Gastrocnemius medialis (tissue), 4 donors: ENCODE measurements at regions of chr22 and their contacts with region 1.

Region 1: GRCh38 chr22:37199103-37199759 is 11.2 kb upstream of the C1QTNF6 start:
- DNase-seq: peak; percentile 97 to 98
- ATAC-seq: peak; percentile 73 to 75
- H3K4me3 ChIP-seq: peak overlapping the region; percentile 69 to 78 (median 74)
- H3K27ac ChIP-seq: peak overlapping the region; percentile 96 to 99 (median 98)
- H3K4me1 ChIP-seq: peaks cover 30 to 36% of the 10 kb centered on the region in 2 donors
- H3K27me3 ChIP-seq: no peaks in the 10 kb centered on the region
- CTCF ChIP-seq: peak; percentile 93 to 98 (median 97)
- POLR2A ChIP-seq: peak; percentile 99

Region 2: DNA sequence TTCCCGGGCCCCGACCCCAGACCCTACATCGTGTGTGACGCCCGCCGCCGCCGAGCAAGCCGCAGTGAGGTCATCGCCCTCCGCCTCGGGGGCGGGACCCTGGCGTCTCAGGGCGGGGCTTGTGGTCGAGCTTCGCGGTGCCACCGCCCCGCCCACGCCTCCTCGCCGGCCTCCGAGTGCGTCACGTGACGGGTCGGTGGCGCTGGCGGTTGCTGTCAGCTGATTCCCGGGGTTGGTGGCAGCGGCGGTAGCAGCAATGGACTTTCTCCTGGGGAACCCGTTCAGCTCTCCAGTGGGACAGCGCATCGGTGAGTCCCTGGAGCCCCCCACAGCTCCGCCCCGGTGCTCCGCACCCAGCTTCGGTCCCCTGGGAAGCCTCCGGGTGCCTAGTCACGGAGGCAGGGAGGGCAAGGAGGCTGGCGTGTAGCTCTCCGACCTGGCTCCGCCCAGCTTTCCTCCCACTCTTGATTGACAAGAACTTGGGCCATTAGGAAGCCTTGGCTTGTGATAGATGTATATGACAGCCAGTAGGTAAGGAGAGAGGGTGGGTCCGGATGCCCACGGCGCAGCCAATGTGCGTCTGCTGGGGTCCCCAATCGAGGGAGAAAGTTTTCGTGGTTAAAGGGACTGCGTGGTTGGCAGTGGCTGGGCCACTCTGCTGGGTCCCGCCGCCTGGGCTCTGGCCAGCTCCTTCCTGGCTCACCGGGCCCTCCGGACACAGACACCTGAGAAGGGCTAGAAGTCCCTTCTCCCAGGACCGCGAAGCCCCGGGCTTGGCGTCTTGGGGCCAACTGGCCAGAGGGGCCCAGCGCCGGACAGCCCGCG is 1899.3 kb before region 1 on chr22 and contains the start of gene TOM1:
- in situ Hi-C with region 1: no loop called
- intact Hi-C with region 1: loop called (anchors 5 kb)
- DNase-seq: peak; percentile 96 to 98
- ATAC-seq: peak; percentile 87 to 91
- H3K4me3 ChIP-seq: peak within 1 kb of the TSS; percentile 80 to 86 (median 82)
- H3K27ac ChIP-seq: peak within 1 kb of the TSS; percentile 98 to 99 (median 98)
- H3K4me1 ChIP-seq: peaks cover 37 to 39% of the 10 kb centered on the region in 2 donors
- H3K27me3 ChIP-seq: no peaks in the 10 kb centered on the region
- CTCF ChIP-seq: peak in 1 of 5 experiments; percentile 36
- POLR2A ChIP-seq: peak; percentile 98
- total RNA-seq, gene TOM1: 363 to 609 (median 425) TPM

Region 3: DNA sequence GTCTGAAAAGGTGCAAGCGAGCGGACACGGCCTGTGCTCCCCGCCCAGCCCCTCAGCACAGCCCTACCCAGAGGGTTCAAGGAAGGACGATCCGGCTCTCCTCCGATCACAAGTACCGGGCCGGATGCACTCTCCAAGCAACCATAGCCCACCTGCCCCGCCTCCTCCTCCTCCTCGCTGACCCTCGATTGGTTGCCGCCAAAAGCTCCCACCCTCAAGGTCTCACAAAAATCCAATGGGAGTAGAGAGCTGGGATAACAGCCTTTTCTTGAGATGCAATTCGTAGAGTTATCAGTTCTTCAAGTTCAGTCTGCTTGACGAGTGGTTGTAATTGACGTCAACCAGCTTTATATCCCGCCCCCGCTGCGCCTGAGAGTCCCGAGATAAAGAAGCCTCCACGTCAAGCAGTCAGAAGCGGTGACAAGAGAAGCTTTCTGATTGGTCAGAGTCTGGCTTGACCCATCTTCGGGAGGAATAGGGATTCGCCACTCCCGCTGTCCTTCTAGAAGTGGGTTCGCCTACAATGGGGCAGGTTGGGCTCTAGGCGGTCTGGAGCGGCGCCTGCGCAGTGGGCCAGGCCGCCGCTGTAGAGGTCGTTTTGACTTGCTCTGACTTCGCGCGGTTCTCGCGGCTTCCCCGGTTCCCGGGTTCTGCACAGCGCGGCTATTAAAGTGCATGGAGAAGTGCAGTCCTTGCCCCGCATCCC is 423.1 kb before region 1 on chr22 and contains the start of gene IFT27:
- in situ Hi-C with region 1: no loop called
- intact Hi-C with region 1: loop called (anchors 10 kb)
- DNase-seq: peak; percentile 100
- ATAC-seq: peak; percentile 99 to 100
- H3K4me3 ChIP-seq: peak within 1 kb of the TSS; percentile 73 to 97 (median 95)
- H3K27ac ChIP-seq: peak within 1 kb of the TSS; percentile 84 to 92 (median 88)
- H3K4me1 ChIP-seq: peaks cover 13 to 16% of the 10 kb centered on the region in 2 donors
- H3K27me3 ChIP-seq: no peaks in the 10 kb centered on the region
- CTCF ChIP-seq: no peak
- POLR2A ChIP-seq: peak; percentile 34 to 46
- total RNA-seq, gene IFT27: 2.4 to 8.3 (median 6.7) TPM

Region 4: GRCh38 chr22:37019309-37020125 is 179.7 kb before region 1 on chr22 and contains the starts of genes MPST and TST:
- in situ Hi-C with region 1: no loop called
- intact Hi-C with region 1: loop called (anchors 1 kb)
- DNase-seq: peak; percentile 73 to 74
- ATAC-seq: peak; percentile 88
- H3K4me3 ChIP-seq: peak within 1 kb of the TSS; percentile 74 to 99 (median 84)
- H3K27ac ChIP-seq: peak within 1 kb of the TSS; percentile 88 to 99 (median 96)
- H3K4me1 ChIP-seq: peaks cover 23 to 33% of the 10 kb centered on the region in 2 donors
- H3K27me3 ChIP-seq: no peaks in the 10 kb centered on the region
- CTCF ChIP-seq: peak; percentile 18 to 79 (median 55)
- POLR2A ChIP-seq: peak; percentile 77 to 81
- total RNA-seq, gene MPST: 131 to 161 (median 146) TPM
- total RNA-seq, gene TST: 42.2 to 66.5 (median 51.9) TPM

Region 5: GRCh38 chr22:37051391-37052385 is 147.5 kb before region 1 on chr22 and contains the start of gene KCTD17:
- in situ Hi-C with region 1: no loop called
- intact Hi-C with region 1: no loop called
- DNase-seq: no peak
- ATAC-seq: no peak
- H3K4me3 ChIP-seq: peak within 1 kb of the TSS; percentile 45 to 51 (median 46)
- H3K27ac ChIP-seq: no peak within 1 kb of the TSS
- H3K4me1 ChIP-seq: no peaks in the 10 kb centered on the region
- H3K27me3 ChIP-seq: peaks cover 0 to 12% (median 12%) of the 10 kb centered on the region in 3 donors
- CTCF ChIP-seq: no peak
- POLR2A ChIP-seq: peak in 1 of 2 donors; percentile 23
- total RNA-seq, gene KCTD17: 1.8 to 3.3 (median 2.6) TPM

Region 6: DNA sequence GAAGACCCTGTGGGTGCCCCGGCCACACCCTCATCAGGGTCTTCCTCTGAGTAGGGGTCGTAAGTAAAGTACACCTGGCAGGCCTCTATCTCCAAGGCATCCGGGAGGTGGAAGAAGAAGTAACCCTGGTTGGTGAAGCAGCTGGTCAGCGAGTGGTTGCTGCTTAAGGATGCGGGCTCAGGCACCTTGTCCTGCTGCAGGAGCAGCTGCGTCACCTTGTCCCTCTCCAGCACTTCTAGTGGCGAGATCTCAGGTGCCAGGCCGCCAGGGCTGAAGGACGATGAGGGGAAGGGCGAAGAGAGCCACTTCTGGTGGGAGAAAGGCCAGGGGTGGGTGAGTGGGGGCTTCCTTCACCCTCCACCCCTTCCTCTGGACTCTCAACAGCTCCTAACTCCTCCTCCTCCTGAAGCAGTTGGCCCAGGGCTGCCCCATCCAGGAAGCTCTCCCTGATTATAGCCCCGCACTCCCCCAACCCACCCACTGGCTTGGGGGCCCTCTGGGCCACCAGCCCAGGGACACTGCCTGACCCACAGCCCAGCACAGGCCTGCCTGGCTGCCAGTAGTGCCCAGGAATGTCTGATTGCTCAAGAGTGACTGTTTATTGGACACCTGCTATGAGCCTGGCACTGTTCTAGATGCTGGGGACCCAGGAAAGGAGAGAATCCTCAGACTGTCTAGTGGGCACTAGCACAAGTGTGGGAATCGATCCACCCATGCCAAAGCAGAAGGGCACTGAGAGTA is 70.5 kb before region 1 on chr22:
- in situ Hi-C with region 1: no loop called
- intact Hi-C with region 1: loop called (anchors 2 kb)
- DNase-seq: peak in 1 of 2 donors; percentile 24
- ATAC-seq: peak in 1 of 2 donors; percentile 78
- H3K4me3 ChIP-seq: no peak overlapping the region
- H3K27ac ChIP-seq: no peak overlapping the region
- H3K4me1 ChIP-seq: no peaks in the 10 kb centered on the region
- H3K27me3 ChIP-seq: peaks cover 0 to 8% (median 0%) of the 10 kb centered on the region in 3 donors
- CTCF ChIP-seq: no peak
- POLR2A ChIP-seq: no peak

Region 7: GRCh38 chr22:37178350-37179135 is 20.7 kb before region 1 on chr22:
- in situ Hi-C with region 1: no loop called
- intact Hi-C with region 1: loop called (anchors 2 kb)
- DNase-seq: peak in 1 of 2 donors; percentile 44
- ATAC-seq: peak in 1 of 2 donors; percentile 57
- H3K4me3 ChIP-seq: no peak overlapping the region
- H3K27ac ChIP-seq: peak overlapping the region; percentile 64 to 80 (median 72)
- H3K4me1 ChIP-seq: peaks cover 29 to 43% of the 10 kb centered on the region in 2 donors
- H3K27me3 ChIP-seq: peaks cover 0 to 11% (median 0%) of the 10 kb centered on the region in 3 donors
- CTCF ChIP-seq: no peak
- POLR2A ChIP-seq: no peak